ENCODE measurements at regions of chr2 and their contacts with region 1.

Region 1: GRCh38 chr2:8681786-8682692 is at the start of gene ID2:
- DNase-seq: peak; percentile 98
- H3K4me3 ChIP-seq: peak within 1 kb of the TSS; percentile 86
- H3K27ac ChIP-seq: peak within 1 kb of the TSS; percentile 85
- H3K27me3 ChIP-seq: no peaks in the 10 kb centered on the region
- CTCF ChIP-seq: 0 out of 2 replicates have a peak, but pooled peaks have one; percentile 8
- polyA plus RNA-seq, gene ID2: 74.3 and 74.5 TPM in 2 replicates

Region 2: GRCh38 chr2:8086796-8087479 is 595.1 kb before region 1 on chr2:
- CTCF ChIA-PET with region 1: no interaction called
- POLR2A ChIA-PET with region 1: interaction called, 11 read pairs
- DNase-seq: peak; percentile 85
- H3K4me3 ChIP-seq: no peak overlapping the region
- H3K27ac ChIP-seq: peak overlapping the region; percentile 81
- H3K27me3 ChIP-seq: no peaks in the 10 kb centered on the region
- CTCF ChIP-seq: no peak

Region 3: DNA sequence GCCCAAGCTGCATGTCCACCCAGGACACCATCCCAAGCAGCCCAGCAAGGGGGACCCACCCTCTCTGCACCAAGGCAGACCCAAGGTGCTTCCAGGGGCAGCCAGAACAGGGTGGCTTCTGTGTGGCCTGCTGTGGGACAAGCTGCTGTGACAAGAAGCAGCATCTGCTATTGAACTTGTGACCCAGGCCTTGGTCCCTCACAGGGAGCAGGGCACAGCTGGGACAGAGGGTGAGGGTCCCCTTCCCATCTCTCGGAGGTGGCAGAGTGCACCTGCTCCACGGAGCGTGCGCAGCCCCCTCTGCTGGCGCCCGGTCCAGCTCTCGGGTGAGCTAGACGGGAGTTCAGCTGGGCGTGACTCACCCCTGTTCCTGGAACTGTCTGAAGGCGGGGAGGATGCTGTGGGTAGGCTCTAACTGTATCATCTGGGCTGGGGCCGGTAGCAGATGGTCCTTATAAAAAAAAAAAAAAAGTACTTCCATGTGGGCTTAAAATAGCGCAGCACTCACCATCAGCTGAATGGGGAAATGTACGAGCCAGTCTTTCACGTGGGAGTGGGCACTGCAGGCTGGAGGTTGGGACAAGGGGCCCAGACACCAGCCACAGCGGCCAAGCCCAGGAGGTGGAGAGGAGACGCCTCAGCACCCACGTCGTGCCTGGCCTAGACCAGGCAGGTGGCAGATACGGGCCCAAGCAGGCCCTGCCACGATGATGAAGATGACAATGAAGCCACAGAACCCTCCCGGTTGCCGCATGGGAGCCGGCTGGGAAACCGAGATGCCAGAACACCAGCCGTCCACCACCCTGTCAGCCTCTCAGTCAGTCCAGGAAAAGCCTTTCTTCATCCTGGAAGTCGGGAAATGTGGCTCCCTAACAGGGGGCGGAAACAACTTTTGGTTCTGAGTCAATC is 137.0 kb before region 1 on chr2:
- CTCF ChIA-PET with region 1: no interaction called
- POLR2A ChIA-PET with region 1: interaction called, 34 read pairs
- DNase-seq: peak; percentile 79
- H3K4me3 ChIP-seq: no peak overlapping the region
- H3K27ac ChIP-seq: peak overlapping the region; percentile 61
- H3K27me3 ChIP-seq: no peaks in the 10 kb centered on the region
- CTCF ChIP-seq: peak; percentile 47

Region 4: GRCh38 chr2:8606226-8606625 is 75.8 kb before region 1 on chr2:
- CTCF ChIA-PET with region 1: no interaction called
- POLR2A ChIA-PET with region 1: interaction called, 32 read pairs
- DNase-seq: no peak
- H3K4me3 ChIP-seq: no peak overlapping the region
- H3K27ac ChIP-seq: no peak overlapping the region
- H3K27me3 ChIP-seq: no peaks in the 10 kb centered on the region
- CTCF ChIP-seq: no peak

Region 5: DNA sequence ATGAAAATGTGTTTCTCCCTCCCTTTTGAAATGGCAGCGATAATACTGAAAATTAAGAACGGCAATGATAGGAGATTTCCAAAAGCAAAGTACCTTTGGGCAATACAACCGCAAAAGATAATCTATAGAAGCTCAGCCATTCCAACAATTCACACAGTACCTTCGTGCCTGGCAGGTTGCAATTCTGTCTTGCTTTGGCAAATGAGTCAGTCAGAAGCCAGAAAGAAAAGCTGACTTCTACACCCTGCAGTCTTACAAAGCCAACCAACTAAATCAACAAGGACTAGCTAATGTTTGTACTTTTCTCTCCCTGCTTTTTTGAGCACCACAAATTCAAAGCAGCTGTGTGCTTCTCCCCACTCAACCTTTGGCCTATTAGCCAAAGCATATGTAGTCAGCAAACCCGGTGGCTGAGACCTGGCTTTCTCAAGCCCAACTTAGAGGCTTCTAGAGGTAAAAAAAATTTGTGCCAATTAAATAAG is 25.8 kb before region 1 on chr2:
- CTCF ChIA-PET with region 1: no interaction called
- POLR2A ChIA-PET with region 1: interaction called, 12 read pairs
- DNase-seq: peak; percentile 67
- H3K4me3 ChIP-seq: no peak overlapping the region
- H3K27ac ChIP-seq: peak overlapping the region; percentile 69
- H3K27me3 ChIP-seq: no peaks in the 10 kb centered on the region
- CTCF ChIP-seq: no peak